Activated CD4-positive, alpha-beta T cell treated with anti-CD3 and anti-CD28 coated beads for 36 hours (primary cell): ENCODE measurements at regions of chr19 and their contacts with region 1.

Region 1: GRCh38 chr19:13093407-13094105 is 9.1 kb downstream of the LYL1 start:
- DNase-seq: peak; percentile 90
- ATAC-seq: peak; percentile 89
- H3K4me3 Mint-ChIP-seq: no peak overlapping the region
- H3K27ac Mint-ChIP-seq: no peak overlapping the region
- H3K4me1 Mint-ChIP-seq: peaks cover 23% of the 10 kb centered on the region
- H3K27me3 Mint-ChIP-seq: peaks cover 29% of the 10 kb centered on the region

Region 2: GRCh38 chr19:12974301-12975220 is 119.0 kb before region 1 on chr19:
- CTCF ChIA-PET with region 1: interaction called, 98 read pairs
- POLR2A ChIA-PET with region 1: no interaction called
- intact Hi-C with region 1: loop called (anchors 1 kb)
- DNase-seq: no peak
- ATAC-seq: no peak
- H3K4me3 Mint-ChIP-seq: no peak overlapping the region
- H3K27ac Mint-ChIP-seq: no peak overlapping the region
- H3K4me1 Mint-ChIP-seq: peaks cover 8% of the 10 kb centered on the region
- H3K27me3 Mint-ChIP-seq: peaks cover 7% of the 10 kb centered on the region

Region 3: DNA sequence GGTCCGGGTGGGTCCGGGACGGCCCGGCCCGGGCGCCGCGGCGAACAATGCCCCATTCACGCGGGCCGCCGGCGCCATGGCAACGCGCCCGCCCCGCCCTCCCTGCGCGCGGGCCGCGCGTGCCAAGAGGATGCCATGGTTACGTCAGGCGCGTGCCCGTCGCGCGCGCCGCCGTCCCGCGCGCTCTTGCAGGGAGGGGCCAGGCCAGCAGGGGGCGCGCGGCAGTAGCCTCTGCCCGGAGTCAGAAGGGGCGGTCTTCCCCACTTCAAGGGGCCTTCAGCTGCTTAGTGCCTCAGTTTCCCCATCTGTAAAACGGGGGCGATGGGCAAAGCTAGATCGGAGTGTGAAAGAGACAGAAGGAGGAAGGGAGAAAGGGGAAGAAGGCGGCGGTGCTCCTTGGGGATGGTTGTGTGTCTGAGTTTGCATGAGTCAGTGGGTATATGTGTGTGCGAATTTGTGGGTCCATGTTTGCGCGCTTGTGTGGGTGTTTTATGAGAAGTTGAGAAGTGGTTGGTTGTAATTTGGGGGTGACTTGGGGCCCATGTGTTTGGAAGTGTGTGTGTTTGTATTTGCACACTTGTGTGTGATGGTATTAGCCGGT is 109.9 kb before region 1 on chr19:
- CTCF ChIA-PET with region 1: interaction called, 98 read pairs
- POLR2A ChIA-PET with region 1: no interaction called
- intact Hi-C with region 1: loop called (anchors 1 kb)
- DNase-seq: peak; percentile 90
- ATAC-seq: peak; percentile 80
- H3K4me3 Mint-ChIP-seq: no peak overlapping the region
- H3K27ac Mint-ChIP-seq: no peak overlapping the region
- H3K4me1 Mint-ChIP-seq: no peaks in the 10 kb centered on the region
- H3K27me3 Mint-ChIP-seq: no peaks in the 10 kb centered on the region

Region 4: DNA sequence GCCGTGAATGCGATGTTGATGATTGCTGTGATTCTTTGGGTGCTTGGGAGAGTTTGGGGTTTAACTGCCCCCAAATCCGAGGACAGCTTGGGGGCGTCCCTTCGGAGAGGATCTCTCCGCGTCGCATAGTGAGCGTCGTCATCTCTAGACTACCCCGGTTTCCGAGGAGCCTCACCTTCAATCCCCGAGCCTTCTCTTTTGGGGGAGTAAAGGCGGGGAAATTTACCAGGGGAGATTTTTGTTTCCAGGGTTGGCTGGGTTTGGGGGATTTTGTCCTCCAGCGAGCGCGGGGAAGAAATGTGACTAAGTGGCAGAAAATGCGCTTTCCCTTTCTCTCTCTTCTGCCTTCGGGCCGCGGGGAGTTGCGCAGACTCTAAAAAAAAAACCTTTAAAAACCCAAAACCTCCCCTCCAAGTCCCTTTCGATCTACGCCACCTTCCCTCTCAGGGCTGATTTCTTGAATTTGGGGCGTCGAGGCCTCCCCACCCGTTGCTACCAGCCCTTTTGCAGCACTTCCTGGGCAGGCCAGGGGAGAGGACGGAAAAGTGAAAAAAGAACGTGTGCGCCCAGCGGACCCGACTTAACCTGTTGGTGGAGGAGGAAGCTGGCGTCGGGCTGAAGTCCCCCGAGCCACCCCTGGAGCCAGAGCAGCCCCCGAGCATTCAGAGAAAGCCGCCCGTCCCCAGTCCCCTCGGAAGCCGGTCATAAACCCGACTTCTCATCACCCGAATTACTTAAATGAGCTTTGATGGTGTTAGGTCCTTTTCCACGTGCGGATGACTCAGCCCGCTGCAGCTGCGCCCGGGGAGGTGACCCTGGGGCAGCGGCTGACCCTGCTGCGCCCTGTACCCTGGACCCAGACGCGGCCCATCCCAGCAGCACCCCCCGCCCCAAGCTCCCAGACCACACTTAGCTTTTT is 80.6 kb before region 1 on chr19:
- CTCF ChIA-PET with region 1: interaction called, 10 read pairs
- POLR2A ChIA-PET with region 1: no interaction called
- intact Hi-C with region 1: loop called in 1 of 2 experiments (anchors 1 kb)
- DNase-seq: peak; percentile 67
- ATAC-seq: peak; percentile 59
- H3K4me3 Mint-ChIP-seq: peak overlapping the region; percentile 72
- H3K27ac Mint-ChIP-seq: peak overlapping the region; percentile 79
- H3K4me1 Mint-ChIP-seq: peaks cover 22% of the 10 kb centered on the region
- H3K27me3 Mint-ChIP-seq: peaks cover 63% of the 10 kb centered on the region

Region 5: DNA sequence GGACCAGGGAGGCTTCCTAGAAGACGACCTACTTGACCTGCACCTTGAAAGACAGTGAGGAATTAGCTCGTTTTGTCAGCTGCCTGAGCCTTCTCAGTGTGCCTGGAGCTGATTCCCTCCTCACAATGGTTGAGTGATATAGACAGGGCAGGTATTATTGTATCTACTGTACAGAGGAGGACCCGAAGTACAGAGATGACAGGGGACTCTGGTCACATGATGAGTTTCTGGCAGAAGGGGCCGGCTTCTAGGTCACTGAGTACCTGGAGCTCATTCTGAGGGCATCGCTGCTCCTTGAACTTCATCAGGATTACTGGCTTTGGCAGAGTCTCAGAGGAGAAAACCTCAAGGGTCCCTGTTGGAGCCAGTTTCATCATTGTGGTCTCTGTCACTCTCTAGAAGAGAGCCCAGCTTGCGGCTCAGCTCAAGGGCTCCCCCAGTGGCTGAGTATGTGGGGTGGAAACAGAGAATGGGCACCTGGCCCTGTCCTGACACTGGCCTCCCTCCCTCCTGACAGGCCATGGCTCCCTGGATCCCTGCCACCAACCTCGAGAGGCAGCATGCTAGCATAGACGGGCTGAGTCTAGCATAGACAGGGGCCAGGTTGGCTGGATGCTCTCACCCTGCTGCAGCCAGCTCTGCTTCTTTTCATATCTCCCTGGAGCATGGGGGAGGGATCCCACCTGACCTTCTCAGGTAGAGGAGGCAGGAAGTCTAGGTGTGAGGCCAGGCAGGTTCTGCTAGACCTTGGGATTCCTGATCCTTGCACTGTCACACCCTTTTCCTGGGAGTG is 59.5 kb before region 1 on chr19:
- CTCF ChIA-PET with region 1: interaction called, 5 read pairs
- POLR2A ChIA-PET with region 1: no interaction called
- intact Hi-C with region 1: loop called in 1 of 2 experiments (anchors 5 kb)
- DNase-seq: peak; percentile 74
- ATAC-seq: peak; percentile 86
- H3K4me3 Mint-ChIP-seq: no peak overlapping the region
- H3K27ac Mint-ChIP-seq: no peak overlapping the region
- H3K4me1 Mint-ChIP-seq: peaks cover 2% of the 10 kb centered on the region
- H3K27me3 Mint-ChIP-seq: no peaks in the 10 kb centered on the region

Region 6: DNA sequence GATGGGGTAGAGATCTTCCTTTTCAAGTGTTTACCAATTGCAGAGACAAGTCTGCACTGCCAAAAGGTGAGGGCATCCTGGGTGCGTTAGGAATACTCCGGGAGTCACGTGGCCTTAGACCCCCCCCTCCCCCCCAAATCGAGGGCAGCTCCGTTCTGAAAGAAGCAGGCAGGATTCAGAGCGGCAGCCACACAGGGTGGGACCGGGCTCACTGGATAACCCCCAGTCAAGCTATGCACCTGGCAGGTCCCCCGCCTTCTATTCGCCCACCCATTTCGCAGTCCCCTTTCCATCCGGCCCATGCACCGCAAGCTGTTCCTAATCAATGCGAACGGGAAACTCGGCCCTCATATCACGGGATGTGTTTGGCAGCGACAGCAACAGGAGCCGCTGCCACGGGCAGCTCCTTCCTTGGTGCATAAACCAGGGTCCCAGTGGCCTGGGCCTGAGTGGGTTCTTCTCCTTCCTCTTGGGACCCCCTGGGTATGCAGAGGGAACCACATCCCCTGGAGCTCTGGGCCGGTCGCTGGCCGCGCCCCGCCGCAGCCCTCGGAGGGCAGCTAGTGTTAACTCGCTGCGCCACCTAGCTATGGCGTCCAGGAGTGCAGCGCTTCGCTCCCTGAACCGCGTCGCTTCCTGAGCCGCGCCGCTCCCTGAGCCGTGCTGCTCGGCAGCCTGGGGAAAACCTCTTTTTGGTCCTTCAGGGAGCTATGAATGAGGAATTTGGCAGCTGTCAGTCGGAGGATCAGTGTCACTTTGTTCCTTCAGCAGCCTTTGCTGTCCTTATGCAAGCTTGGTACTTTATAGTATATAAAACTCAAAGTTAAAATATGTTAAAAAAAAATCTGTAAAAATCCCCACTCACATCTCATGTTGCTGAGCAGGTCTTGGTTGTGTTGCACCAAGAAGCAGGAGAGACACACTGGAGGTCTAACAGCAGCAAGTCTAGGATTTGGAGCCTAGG is 32.3 kb before region 1 on chr19:
- CTCF ChIA-PET with region 1: interaction called, 24 read pairs
- POLR2A ChIA-PET with region 1: no interaction called
- intact Hi-C with region 1: loop called in 1 of 2 experiments (anchors 1 kb)
- DNase-seq: peak; percentile 89
- ATAC-seq: peak; percentile 99
- H3K4me3 Mint-ChIP-seq: peak overlapping the region; percentile 67
- H3K27ac Mint-ChIP-seq: no peak overlapping the region
- H3K4me1 Mint-ChIP-seq: peaks cover 6% of the 10 kb centered on the region
- H3K27me3 Mint-ChIP-seq: peaks cover 16% of the 10 kb centered on the region

Region 7: GRCh38 chr19:13104360-13104847 is 10.8 kb after region 1 on chr19:
- CTCF ChIA-PET with region 1: interaction called, 27 read pairs
- POLR2A ChIA-PET with region 1: no interaction called
- intact Hi-C with region 1: no loop called
- DNase-seq: peak; percentile 84
- ATAC-seq: peak; percentile 48
- H3K4me3 Mint-ChIP-seq: peak overlapping the region; percentile 78
- H3K27ac Mint-ChIP-seq: peak overlapping the region; percentile 90
- H3K4me1 Mint-ChIP-seq: peaks cover 34% of the 10 kb centered on the region
- H3K27me3 Mint-ChIP-seq: no peaks in the 10 kb centered on the region